ENCODE measurements at regions of chr1 and their contacts with region 1.

Region 1: DNA sequence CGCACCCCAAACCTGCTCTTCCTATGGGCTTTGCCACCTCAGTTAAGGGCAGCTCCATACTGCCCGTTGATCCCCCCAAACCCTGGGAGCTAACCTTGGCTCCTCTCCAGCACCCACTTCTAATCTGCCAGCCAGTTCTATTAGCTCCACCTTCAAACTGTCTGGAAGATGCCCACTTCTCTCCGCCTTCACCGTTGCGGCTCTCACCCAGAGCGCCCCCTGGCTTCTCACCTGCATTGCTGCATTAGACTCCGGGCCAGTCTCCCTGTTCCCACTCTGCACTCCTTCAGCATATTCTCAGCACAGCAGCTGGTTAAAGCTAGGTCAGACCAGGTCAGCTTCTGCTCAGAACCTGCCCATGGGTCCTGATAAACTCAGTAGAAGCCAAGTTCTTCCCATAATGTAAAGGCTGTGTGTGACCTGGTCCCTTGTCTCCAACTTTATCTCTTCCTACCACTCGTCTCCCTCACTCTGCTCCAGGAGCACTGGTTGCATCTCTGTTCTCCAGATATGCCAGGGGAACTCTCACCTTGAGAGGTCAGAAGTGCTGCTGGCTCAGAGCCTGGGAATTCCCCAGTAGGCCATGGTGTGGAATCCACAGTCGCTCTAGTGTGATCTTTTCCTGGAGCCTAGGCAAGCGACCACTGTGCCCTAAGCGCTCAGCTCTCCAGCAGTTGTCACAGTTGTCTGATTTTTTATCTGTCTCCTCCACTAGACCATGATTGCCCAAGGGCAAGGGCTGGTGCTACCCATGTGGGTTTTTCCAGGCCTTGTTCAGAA is 150.3 kb downstream of the HMGB4 start:
- DNase-seq: peak; percentile 28
- ATAC-seq: peak; percentile 99
- H3K4me3 ChIP-seq: no peak overlapping the region
- H3K27ac ChIP-seq: no peak overlapping the region
- H3K4me1 ChIP-seq: no peaks in the 10 kb centered on the region
- H3K27me3 ChIP-seq: peaks cover 21% of the 10 kb centered on the region
- CTCF ChIP-seq: peak; percentile 43 to 96 (median 95); a peak in 5 of 6 replicates
- POLR2A ChIP-seq: no peak
- RAD21 ChIP-seq: peak; percentile 61

Region 2: DNA sequence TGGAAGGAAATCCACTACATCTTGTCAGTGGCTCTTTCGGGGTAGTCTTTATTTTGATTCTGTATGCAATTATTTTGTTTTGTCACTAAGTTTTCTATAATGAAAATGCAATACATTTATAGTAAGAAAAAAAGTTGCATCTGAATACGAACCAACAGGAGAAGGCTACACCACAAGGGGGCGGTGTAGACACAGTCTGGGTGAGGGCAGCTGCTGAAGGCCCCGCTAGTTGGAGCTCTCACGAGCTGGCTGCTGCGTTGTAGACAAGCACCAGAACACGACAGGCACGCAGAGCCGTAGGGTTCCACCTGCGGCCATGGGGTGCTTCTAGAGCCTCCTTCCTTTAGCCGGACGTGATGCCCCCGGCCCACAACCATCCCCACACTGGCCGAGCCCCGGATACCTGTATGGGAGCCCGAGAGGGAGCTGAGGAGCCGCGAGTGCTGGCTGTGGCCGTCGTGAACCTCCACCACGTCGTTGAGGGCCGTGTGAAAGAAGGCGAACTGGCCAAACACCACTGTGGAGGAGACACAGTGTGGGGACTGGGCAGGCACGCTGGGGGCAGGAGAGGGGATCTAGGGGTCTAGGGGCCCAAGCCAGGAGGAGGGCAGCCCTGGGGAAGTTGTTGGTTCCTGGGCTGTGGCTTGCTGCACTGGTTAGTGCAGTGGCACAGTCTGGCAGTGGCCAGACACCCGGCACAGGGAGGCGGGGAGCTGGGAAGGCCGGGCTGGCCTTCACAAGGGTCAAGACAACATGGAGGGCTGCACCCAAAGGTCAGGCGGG is 380.9 kb before region 1 on chr1:
- CTCF ChIA-PET with region 1: interaction called, 20 read pairs
- POLR2A ChIA-PET with region 1: no interaction called
- RAD21 ChIA-PET with region 1: no interaction called
- intact Hi-C with region 1: no loop called
- DNase-seq: peak; percentile 82
- ATAC-seq: peak; percentile 85
- H3K4me3 ChIP-seq: no peak overlapping the region
- H3K27ac ChIP-seq: no peak overlapping the region
- H3K4me1 ChIP-seq: peaks cover 0 to 12% of the 10 kb centered on the region in 2 experiments; a peak in 2 of 4 replicates
- H3K27me3 ChIP-seq: 0 out of 2 replicates have a peak, but pooled peaks cover 5% of the 10 kb centered on the region
- CTCF ChIP-seq: peak; percentile 99 to 100 (median 100)
- POLR2A ChIP-seq: no peak
- RAD21 ChIP-seq: peak; percentile 67

Region 3: GRCh38 chr1:33641104-33641830 is 372.9 kb before region 1 on chr1:
- CTCF ChIA-PET with region 1: interaction called, 6 read pairs
- POLR2A ChIA-PET with region 1: no interaction called
- RAD21 ChIA-PET with region 1: no interaction called
- intact Hi-C with region 1: loop called (anchors 5 kb)
- DNase-seq: peak; percentile 32
- ATAC-seq: peak; percentile 89
- H3K4me3 ChIP-seq: no peak overlapping the region
- H3K27ac ChIP-seq: no peak overlapping the region
- H3K4me1 ChIP-seq: no peaks in the 10 kb centered on the region
- H3K27me3 ChIP-seq: peaks cover 35% of the 10 kb centered on the region; the same call in 1 of the 2 replicates
- CTCF ChIP-seq: peak; percentile 40 to 68 (median 65); a peak in 5 of 6 replicates
- POLR2A ChIP-seq: no peak
- RAD21 ChIP-seq: peak; percentile 52

Region 4: GRCh38 chr1:33735621-33736020 is 278.5 kb before region 1 on chr1:
- CTCF ChIA-PET with region 1: interaction called, 20 read pairs
- POLR2A ChIA-PET with region 1: no interaction called
- RAD21 ChIA-PET with region 1: no interaction called
- intact Hi-C with region 1: loop called (anchors 1 kb)
- DNase-seq: peak; percentile 1
- ATAC-seq: 0 out of 2 replicates have a peak, but pooled peaks have one; percentile 32
- H3K4me3 ChIP-seq: no peak overlapping the region
- H3K27ac ChIP-seq: no peak overlapping the region
- H3K4me1 ChIP-seq: no peaks in the 10 kb centered on the region
- H3K27me3 ChIP-seq: peaks cover 69% of the 10 kb centered on the region
- CTCF ChIP-seq: peak; percentile 14 to 53 (median 37); a peak in 3 of 6 replicates
- POLR2A ChIP-seq: no peak
- RAD21 ChIP-seq: peak; percentile 60

Region 5: DNA sequence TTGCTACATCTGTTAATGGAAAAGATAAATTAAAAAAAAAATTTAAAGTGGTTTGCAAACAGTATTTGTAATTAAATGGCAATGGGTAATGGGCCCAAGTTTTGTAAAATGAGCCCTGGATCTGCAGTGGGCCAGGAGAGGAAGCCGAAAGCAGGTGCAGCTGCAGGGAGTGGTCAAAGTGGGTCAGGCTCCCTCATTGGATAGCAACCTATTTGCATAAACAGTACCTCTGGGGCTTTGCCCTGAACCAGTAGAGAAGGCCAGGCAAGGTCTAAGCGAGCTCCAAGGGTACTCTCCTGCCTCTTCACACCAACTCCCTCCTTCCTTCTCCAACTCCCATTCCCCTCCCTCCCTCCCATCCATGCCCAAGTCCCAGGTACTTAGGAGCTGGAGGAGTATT is 11.3 kb before region 1 on chr1:
- CTCF ChIA-PET with region 1: interaction called, 12 read pairs
- POLR2A ChIA-PET with region 1: no interaction called
- RAD21 ChIA-PET with region 1: no interaction called
- intact Hi-C with region 1: no loop called
- DNase-seq: no peak
- ATAC-seq: no peak
- H3K4me3 ChIP-seq: no peak overlapping the region
- H3K27ac ChIP-seq: no peak overlapping the region
- H3K4me1 ChIP-seq: no peaks in the 10 kb centered on the region
- H3K27me3 ChIP-seq: peaks cover 28% of the 10 kb centered on the region
- CTCF ChIP-seq: no peak
- POLR2A ChIP-seq: no peak
- RAD21 ChIP-seq: no peak

Region 6: DNA sequence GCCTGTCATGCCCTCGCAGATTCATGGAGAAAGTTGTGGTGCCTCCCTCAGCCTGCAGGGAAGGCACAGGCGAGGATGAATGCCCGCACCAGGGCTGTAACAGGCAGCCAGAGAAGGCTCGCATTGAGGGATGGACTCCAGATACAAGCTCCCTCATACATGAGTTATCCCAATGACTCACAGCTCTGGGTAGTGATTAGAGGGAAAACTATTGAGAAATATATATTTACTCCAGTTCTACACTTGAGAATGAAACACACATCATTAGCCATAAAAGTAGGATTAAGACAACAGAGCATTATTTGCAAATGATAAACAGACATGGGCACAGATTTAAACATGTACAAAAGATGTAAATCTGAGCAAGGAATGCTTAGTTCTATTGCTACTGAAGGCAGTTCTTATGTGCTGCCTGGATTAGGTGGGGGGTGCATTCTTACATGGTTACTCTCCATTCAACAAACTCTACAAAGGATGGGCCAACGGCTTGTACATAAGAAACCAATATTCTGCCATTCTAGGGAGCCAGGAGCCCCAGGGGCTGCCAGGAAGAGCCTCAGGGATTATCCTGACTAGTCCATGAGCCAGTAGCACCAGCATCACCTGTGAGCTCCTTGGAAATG is 52.9 kb after region 1 on chr1:
- CTCF ChIA-PET with region 1: no interaction called
- POLR2A ChIA-PET with region 1: no interaction called
- RAD21 ChIA-PET with region 1: no interaction called
- intact Hi-C with region 1: no loop called
- DNase-seq: no peak
- ATAC-seq: no peak
- H3K4me3 ChIP-seq: no peak overlapping the region
- H3K27ac ChIP-seq: no peak overlapping the region
- H3K4me1 ChIP-seq: no peaks in the 10 kb centered on the region
- H3K27me3 ChIP-seq: peaks cover 32% of the 10 kb centered on the region
- CTCF ChIP-seq: no peak
- POLR2A ChIP-seq: no peak
- RAD21 ChIP-seq: no peak

Region 7: DNA sequence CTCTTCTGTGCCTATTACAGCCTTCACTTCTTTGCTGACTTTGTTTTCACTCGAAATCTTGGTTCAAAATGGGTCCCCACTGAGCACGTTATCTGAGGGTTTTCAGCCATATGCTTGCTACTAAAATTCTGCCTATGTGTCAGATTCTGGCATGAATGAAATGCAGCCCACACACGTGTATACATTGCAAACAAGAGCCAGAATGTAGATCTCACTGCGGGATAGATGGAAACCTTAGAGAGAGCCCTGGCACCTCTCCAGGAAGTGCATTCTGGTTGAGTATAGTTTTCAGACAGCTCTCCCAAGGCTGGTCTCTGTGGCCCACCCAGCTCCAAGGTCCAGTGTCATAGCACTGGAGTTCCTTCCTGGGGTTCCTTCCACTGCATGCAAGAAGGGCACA is 506.0 kb after region 1 on chr1:
- CTCF ChIA-PET with region 1: no interaction called
- POLR2A ChIA-PET with region 1: no interaction called
- RAD21 ChIA-PET with region 1: no interaction called
- intact Hi-C with region 1: no loop called
- DNase-seq: no peak
- ATAC-seq: no peak
- H3K4me3 ChIP-seq: no peak overlapping the region
- H3K27ac ChIP-seq: no peak overlapping the region
- H3K4me1 ChIP-seq: no peaks in the 10 kb centered on the region
- H3K27me3 ChIP-seq: no peaks in the 10 kb centered on the region
- CTCF ChIP-seq: no peak
- POLR2A ChIP-seq: no peak
- RAD21 ChIP-seq: no peak

Measured in HCT116 (cell line).